ENCODE measurements at regions of chr4 and their contacts with region 1.

Region 1: DNA sequence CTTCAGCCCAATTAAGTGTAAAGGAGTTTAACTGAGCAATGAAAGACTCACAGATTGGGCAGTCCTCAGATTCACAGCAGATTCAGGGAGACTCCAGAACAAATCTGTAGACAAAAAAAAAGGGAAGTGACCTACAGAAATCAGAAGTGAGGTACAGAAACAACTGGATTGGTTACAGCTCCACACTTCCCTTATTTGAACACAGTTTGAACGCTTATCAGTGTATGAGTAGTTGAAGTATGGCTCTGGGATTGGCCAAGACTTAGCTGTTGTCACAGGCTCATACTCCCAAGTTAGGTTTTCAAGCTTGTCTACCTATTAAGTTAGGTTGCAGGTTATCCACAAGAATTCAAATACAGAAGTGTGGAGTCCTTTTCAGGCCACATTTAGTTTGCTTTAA is 112.4 kb upstream of the ELOVL6 start:
- DNase-seq: no peak
- H3K4me3 ChIP-seq: no peak overlapping the region
- H3K27ac ChIP-seq: no peak overlapping the region
- H3K4me1 ChIP-seq: no peaks in the 10 kb centered on the region
- H3K27me3 ChIP-seq: no peaks in the 10 kb centered on the region
- CTCF ChIP-seq: no peak

Region 2: DNA sequence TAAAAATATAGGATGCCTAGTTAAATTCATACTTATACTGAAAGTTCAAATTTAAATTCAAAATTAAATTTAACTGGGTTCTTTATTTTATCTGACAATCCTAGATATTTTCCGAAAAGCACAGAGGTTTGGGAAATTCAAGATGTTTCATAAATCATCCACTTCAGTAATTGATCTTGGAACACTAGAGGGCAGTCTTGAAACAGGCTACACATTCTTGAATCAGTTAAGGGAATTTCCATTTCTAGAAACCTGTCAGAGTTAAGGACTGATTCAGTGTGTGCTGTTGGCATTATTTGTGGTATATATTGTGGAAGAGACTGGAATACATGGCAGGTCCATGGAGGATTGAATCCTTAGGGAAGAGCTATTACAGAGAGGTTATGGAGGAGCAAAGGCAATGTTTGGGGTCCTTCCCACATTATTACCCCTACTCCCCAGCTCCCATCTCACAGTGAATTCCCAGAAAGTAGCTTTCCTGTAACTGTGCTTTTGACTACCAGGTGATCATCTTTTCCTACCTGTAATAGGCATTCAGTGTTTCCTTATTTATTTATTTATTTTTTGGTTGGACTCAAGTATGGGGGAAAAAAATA is 305.2 kb before region 1 on chr4:
- intact Hi-C with region 1: loop called (anchors 10 kb)
- DNase-seq: no peak
- H3K4me3 ChIP-seq: no peak overlapping the region
- H3K27ac ChIP-seq: no peak overlapping the region
- H3K4me1 ChIP-seq: no peaks in the 10 kb centered on the region
- H3K27me3 ChIP-seq: no peaks in the 10 kb centered on the region
- CTCF ChIP-seq: peak; percentile 74

Region 3: DNA sequence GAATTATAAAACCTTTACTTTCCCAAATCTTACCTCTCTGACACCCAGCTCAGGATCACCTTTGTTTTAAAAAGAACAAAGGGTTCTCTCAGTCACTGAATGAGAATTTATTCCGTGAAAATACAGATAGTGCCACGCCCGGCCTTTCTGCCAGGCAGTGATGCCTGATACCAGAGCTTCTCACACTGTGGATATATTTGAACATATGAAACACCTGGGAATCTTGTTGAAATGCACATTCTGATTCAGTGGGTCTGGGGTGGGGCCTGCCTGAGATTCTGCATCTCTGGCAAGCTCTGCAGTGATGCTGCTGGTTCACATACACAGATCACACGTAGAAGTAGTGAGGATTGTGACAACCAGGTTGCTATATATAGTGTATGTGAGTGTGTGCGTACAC is 158.4 kb before region 1 on chr4:
- intact Hi-C with region 1: no loop called
- DNase-seq: no peak
- H3K4me3 ChIP-seq: no peak overlapping the region
- H3K27ac ChIP-seq: no peak overlapping the region
- H3K4me1 ChIP-seq: no peaks in the 10 kb centered on the region
- H3K27me3 ChIP-seq: no peaks in the 10 kb centered on the region
- CTCF ChIP-seq: no peak

Region 4: GRCh38 chr4:110245577-110245976 is 65.2 kb before region 1 on chr4:
- intact Hi-C with region 1: no loop called
- DNase-seq: no peak
- H3K4me3 ChIP-seq: no peak overlapping the region
- H3K27ac ChIP-seq: no peak overlapping the region
- H3K4me1 ChIP-seq: no peaks in the 10 kb centered on the region
- H3K27me3 ChIP-seq: no peaks in the 10 kb centered on the region
- CTCF ChIP-seq: no peak